PC-3 (cell line): ENCODE measurements at regions of chr6 and their contacts with region 1.

Region 1: DNA sequence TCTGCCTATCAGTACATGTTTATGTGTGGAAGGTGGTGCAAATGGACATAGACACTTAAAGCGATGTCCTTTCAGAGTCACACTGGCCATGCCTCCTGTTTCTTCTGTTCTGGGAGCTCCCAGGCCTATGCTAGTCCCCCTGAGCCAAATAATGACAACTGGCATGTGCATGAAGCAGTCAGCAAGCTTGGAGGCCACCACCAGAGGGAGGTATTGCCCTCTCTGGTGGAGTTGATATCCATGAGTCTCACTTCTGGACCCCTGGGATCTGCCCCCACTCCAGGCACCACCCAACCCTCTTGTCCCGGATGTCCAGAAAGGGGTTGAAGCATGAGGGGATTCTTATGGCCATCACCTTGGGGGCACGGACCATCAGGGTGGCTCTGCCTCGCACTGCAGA is 172.2 kb downstream of the AIG1 start:
- DNase-seq: peak; percentile 66
- ATAC-seq: no peak
- H3K4me3 ChIP-seq: no peak overlapping the region
- H3K27ac ChIP-seq: 0 out of 2 replicates have a peak overlapping the region, but pooled peaks have one; percentile 11
- H3K4me1 ChIP-seq: peaks cover 20% of the 10 kb centered on the region
- H3K27me3 ChIP-seq: no peaks in the 10 kb centered on the region
- CTCF ChIP-seq: peak; percentile 87

Region 2: GRCh38 chr6:143337201-143337949 is 104.5 kb after region 1 on chr6:
- CTCF ChIA-PET with region 1: no interaction called
- POLR2A ChIA-PET with region 1: no interaction called
- intact Hi-C with region 1: loop called (anchors 10 kb)
- DNase-seq: peak; percentile 37
- ATAC-seq: no peak
- H3K4me3 ChIP-seq: no peak overlapping the region
- H3K27ac ChIP-seq: peak overlapping the region; percentile 100
- H3K4me1 ChIP-seq: peaks cover 61% of the 10 kb centered on the region
- H3K27me3 ChIP-seq: no peaks in the 10 kb centered on the region
- CTCF ChIP-seq: peak; percentile 62